ENCODE measurements at regions of chr2 and their contacts with region 1.

Region 1: GRCh38 chr2:148989882-148990493 is 48.5 kb upstream of the LYPD6B start:
- DNase-seq: peak in 1 of 2 donors; percentile 72
- ATAC-seq: peak; percentile 57 to 92 (median 72)
- H3K4me3 ChIP-seq: no peak overlapping the region
- H3K27ac ChIP-seq: no peak overlapping the region
- H3K4me1 ChIP-seq: no peaks in the 10 kb centered on the region
- H3K27me3 ChIP-seq: no peaks in the 10 kb centered on the region
- CTCF ChIP-seq: peak; percentile 47 to 84 (median 77)

Region 2: DNA sequence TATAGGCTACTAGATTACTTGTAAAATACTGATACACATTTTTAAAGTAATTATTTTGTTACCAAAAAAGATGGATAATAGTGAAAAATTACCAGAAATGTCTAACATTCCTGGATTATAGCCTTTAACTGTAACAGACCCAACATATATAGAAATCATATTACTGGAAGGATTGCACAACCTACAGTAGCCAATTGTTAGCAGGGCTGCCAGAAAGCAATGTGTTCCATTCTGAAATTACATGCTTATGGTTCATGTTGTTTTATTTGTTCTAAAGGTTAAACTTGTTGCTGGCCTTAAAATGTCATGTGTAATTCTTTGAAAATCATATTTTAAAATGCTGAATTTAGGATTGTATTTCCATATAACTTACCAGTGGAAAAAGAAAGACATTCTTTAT is 1938.7 kb before region 1 on chr2:
- intact Hi-C with region 1: loop called in 1 of 10 experiments (anchors 10 kb)
- DNase-seq: no peak
- ATAC-seq: no peak
- H3K4me3 ChIP-seq: no peak overlapping the region
- H3K27ac ChIP-seq: no peak overlapping the region
- H3K4me1 ChIP-seq: no peaks in the 10 kb centered on the region
- H3K27me3 ChIP-seq: peaks cover 0 to 5% (median 0%) of the 10 kb centered on the region in 7 donors
- CTCF ChIP-seq: no peak

Region 3: GRCh38 chr2:147945660-147946059 is 1044.3 kb before region 1 on chr2:
- intact Hi-C with region 1: loop called in 3 of 10 experiments (anchors 5 to 10 kb)
- DNase-seq: no peak
- ATAC-seq: no peak
- H3K4me3 ChIP-seq: no peak overlapping the region
- H3K27ac ChIP-seq: no peak overlapping the region
- H3K4me1 ChIP-seq: no peaks in the 10 kb centered on the region
- H3K27me3 ChIP-seq: no peaks in the 10 kb centered on the region
- CTCF ChIP-seq: no peak

Region 4: GRCh38 chr2:148565272-148565894 is 424.6 kb before region 1 on chr2:
- intact Hi-C with region 1: loop called in 8 of 10 experiments (anchors 2 to 10 kb)
- DNase-seq: no peak
- ATAC-seq: peak in 2 of 8 donors; percentile 57 to 59
- H3K4me3 ChIP-seq: no peak overlapping the region
- H3K27ac ChIP-seq: no peak overlapping the region
- H3K4me1 ChIP-seq: peaks cover 0 to 5% (median 0%) of the 10 kb centered on the region in 9 donors
- H3K27me3 ChIP-seq: peaks cover 0 to 8% (median 0%) of the 10 kb centered on the region in 7 donors
- CTCF ChIP-seq: peak in 7 of 9 donors; percentile 28 to 56 (median 41)

Region 5: GRCh38 chr2:148644883-148645538 is 345.0 kb before region 1 on chr2:
- intact Hi-C with region 1: loop called in 5 of 10 experiments (anchors 5 to 10 kb)
- DNase-seq: peak; percentile 92 to 95
- ATAC-seq: peak; percentile 87 to 95 (median 92)
- H3K4me3 ChIP-seq: peak overlapping the region; percentile 77 to 97 (median 89)
- H3K27ac ChIP-seq: peak overlapping the region; percentile 99 to 100 (median 100)
- H3K4me1 ChIP-seq: peaks cover 0 to 56% (median 32%) of the 10 kb centered on the region in 9 donors
- H3K27me3 ChIP-seq: no peaks in the 10 kb centered on the region
- CTCF ChIP-seq: peak in 8 of 9 donors; percentile 17 to 48 (median 36)

Region 6: GRCh38 chr2:149040451-149040850 is 50.5 kb after region 1 on chr2:
- intact Hi-C with region 1: no loop called
- DNase-seq: no peak
- ATAC-seq: no peak
- H3K4me3 ChIP-seq: no peak overlapping the region
- H3K27ac ChIP-seq: no peak overlapping the region
- H3K4me1 ChIP-seq: peaks cover 0 to 3% (median 0%) of the 10 kb centered on the region in 9 donors
- H3K27me3 ChIP-seq: peaks cover 7 to 55% (median 42%) of the 10 kb centered on the region in 7 donors
- CTCF ChIP-seq: peak in 4 of 9 donors; percentile 15 to 51 (median 24)

Measured in heart right ventricle (tissue), 16 donors.